Endothelial cell of umbilical vein (primary cell): ENCODE measurements at regions of chr9 and their contacts with region 1.

Region 1: DNA sequence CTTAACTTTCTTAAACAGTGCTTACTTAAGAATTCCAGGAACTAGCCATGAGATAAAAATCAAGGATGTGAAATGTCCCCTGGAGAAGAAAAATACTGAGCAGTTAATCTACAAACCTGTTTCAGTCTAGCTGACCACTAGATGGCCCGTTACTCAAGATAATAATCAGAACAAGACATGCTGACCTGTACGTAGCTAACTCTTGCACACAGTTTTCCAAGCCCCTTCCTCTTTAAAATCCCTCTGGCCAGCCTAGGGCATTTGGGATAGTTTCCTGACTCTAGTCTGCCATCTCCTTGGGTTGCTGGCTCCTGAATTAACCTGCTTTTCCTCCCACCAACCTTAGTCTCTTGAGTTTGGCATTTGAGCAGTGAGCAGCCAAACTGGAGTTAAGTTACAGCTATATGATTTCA is 59.2 kb upstream of the TRAF1 start:
- DNase-seq: peak; percentile 84
- H3K4me3 ChIP-seq: no peak overlapping the region
- H3K27ac ChIP-seq: no peak overlapping the region
- H3K4me1 ChIP-seq: peaks cover 17% of the 10 kb centered on the region
- H3K27me3 ChIP-seq: no peaks in the 10 kb centered on the region
- CTCF ChIP-seq: peak; percentile 54
- POLR2A ChIP-seq: no peak

Region 2: DNA sequence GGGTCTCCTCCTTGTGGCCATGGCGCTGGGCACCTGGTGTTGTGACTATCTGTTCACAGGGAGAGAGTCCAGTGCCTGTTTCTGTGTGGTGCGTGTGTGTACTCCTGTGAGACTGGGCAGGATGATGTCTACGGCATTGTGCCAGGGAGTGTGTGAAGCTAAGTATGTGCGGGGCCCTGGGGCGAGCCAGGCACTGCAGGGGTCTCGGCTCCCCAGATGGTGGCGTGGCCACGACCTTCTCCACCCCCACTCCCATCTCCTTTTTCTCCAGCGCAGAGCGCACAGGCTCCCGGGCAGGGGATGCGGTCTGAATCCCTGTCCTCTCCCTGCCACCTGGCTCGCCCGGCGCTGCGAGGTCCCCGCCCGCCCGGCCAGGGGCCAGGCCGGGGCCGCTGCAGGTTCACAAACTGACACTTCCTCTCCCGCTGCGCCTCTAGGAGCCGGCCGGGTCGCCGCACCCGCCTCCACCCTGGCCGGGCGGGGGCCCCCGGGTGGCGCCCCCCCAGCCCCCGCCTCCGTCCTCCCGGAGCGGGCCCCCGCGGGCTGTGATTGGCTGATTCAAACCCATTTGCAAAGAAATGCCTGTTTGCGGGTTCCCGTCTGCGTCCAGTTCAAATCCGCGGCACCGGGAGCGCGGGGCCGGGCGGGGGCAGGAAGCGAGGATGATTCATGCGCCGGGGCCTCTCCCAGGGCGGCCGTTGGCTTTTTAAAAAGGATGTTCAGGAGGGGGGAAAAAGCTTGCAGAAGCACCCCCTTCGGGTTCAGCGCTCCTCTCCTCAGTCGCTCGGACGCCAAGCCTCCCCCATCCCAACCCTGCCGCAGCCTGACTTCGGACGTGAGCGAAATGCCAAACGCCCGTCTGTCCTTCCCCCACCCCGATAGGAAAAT is 109.6 kb before region 1 on chr9:
- CTCF ChIA-PET with region 1: interaction called, 7 read pairs
- POLR2A ChIA-PET with region 1: no interaction called
- dilution Hi-C with region 1: no loop called
- intact Hi-C with region 1: loop called (anchors 5 kb)
- DNase-seq: peak; percentile 90
- H3K4me3 ChIP-seq: peak overlapping the region; percentile 66 to 86 (median 70)
- H3K27ac ChIP-seq: peak overlapping the region; percentile 74
- H3K4me1 ChIP-seq: peaks cover 26% of the 10 kb centered on the region
- H3K27me3 ChIP-seq: no peaks in the 10 kb centered on the region
- CTCF ChIP-seq: peak in 1 of 2 donors; percentile 11
- POLR2A ChIP-seq: no peak

Region 3: GRCh38 chr9:120960001-120960400 is 25.8 kb before region 1 on chr9:
- CTCF ChIA-PET with region 1: interaction called, 12 read pairs
- POLR2A ChIA-PET with region 1: no interaction called
- dilution Hi-C with region 1: no loop called
- intact Hi-C with region 1: no loop called
- DNase-seq: no peak
- H3K4me3 ChIP-seq: no peak overlapping the region
- H3K27ac ChIP-seq: no peak overlapping the region
- H3K4me1 ChIP-seq: no peaks in the 10 kb centered on the region
- H3K27me3 ChIP-seq: no peaks in the 10 kb centered on the region
- CTCF ChIP-seq: no peak
- POLR2A ChIP-seq: no peak

Region 4: DNA sequence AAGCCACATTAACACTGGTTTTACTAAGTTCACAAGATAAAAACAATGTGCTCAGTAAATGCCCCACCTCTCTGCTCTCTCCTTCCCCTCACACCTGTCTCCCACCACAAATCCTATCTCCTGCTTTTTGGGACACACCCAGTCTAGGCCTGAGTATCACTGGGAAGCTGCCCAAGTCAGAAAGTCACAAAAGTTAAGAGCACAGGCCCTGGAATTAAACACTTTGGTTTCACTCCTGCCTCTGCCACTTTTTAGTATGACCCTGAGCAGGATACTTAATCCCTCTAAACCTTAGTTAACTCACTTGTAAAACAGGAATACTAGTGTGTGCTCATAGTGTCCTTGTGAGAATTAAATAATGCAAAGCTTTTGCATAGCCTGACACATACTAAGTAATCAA is 53.0 kb after region 1 on chr9:
- CTCF ChIA-PET with region 1: interaction called, 15 read pairs
- POLR2A ChIA-PET with region 1: no interaction called
- dilution Hi-C with region 1: no loop called
- intact Hi-C with region 1: no loop called
- DNase-seq: no peak
- H3K4me3 ChIP-seq: no peak overlapping the region
- H3K27ac ChIP-seq: no peak overlapping the region
- H3K4me1 ChIP-seq: no peaks in the 10 kb centered on the region
- H3K27me3 ChIP-seq: no peaks in the 10 kb centered on the region
- CTCF ChIP-seq: no peak
- POLR2A ChIP-seq: no peak

Region 5: GRCh38 chr9:121121582-121122087 is 135.8 kb after region 1 on chr9:
- CTCF ChIA-PET with region 1: interaction called, 14 read pairs
- POLR2A ChIA-PET with region 1: no interaction called
- dilution Hi-C with region 1: no loop called
- intact Hi-C with region 1: loop called (anchors 5 kb)
- DNase-seq: peak; percentile 98
- H3K4me3 ChIP-seq: peak overlapping the region; percentile 38 to 93 (median 79)
- H3K27ac ChIP-seq: peak overlapping the region; percentile 59
- H3K4me1 ChIP-seq: peaks cover 11% of the 10 kb centered on the region
- H3K27me3 ChIP-seq: no peaks in the 10 kb centered on the region
- CTCF ChIP-seq: no peak
- POLR2A ChIP-seq: peak; percentile 65